ENCODE measurements at regions of chr4 and their contacts with region 1.

Region 1: DNA sequence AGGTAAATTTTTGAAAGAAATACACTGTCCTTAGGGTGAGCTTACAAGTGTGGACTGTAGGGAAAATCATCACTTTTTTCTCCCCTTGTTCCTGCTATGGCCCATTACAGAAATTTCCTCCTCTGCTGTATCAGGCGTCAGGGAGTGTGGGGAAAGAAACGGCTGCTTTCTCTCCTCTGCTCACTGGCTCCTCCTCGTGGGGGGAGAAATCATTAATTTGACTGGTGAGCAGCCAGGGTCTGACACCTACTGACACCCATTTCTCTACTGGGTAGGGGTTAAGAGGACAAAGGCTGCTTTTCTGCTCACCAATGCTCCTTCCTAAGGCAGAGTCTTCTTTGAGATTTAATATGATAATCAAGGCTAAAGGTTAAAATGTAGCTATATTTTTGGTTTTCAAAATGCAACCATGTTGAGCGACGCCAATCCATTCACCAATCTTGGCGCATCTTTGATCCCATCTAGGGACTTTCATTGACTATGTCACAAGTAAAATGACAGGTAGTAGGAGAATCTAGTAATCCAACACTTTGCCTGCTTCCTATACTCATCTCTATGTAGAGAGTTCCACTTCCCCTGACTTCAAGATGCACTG is 25.1 kb downstream of the SETD7 start:
- DNase-seq: no peak
- H3K4me3 ChIP-seq: no peak overlapping the region
- CTCF ChIP-seq: peak; percentile 54

Region 2: DNA sequence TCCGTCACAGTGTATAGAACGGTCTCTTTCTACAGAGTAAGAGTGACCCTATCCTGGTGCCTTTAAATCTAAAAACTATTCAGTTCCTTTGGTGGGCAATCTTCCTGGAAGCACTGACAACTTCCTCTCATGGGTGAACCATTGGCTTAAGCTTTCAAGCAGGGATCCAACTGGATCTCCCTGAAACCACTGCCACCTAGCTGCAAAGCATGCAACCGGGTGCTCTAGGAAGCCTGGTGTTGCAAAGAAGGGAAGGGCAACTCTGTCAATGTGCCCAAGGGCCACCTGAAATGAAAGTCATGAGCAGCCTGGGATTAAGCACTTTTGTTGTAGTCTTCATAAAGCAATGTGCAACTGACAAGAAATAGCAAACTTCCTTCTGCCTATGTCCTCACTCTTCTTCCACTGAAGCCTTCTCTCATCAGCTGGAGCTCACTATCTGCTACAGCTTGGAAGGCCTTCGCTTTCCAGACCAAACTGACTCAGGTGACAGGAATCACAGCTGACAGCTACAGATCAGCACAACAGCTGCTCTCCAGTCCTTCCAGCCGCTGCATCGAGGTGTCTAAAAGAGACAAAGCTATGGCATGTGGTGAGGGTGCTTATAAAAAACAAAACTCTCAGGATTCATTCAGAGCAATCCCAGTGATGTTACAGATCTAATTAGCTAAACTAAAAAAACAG is 21.1 kb before region 1 on chr4:
- CTCF ChIA-PET with region 1: interaction called, 10 read pairs
- POLR2A ChIA-PET with region 1: no interaction called
- DNase-seq: no peak
- H3K4me3 ChIP-seq: no peak overlapping the region
- CTCF ChIP-seq: peak; percentile 40

Region 3: GRCh38 chr4:139547979-139548378 is 17.0 kb after region 1 on chr4:
- CTCF ChIA-PET with region 1: interaction called, 11 read pairs
- POLR2A ChIA-PET with region 1: no interaction called
- DNase-seq: no peak
- H3K4me3 ChIP-seq: no peak overlapping the region
- CTCF ChIP-seq: no peak

Measured in AG04449 (cell line).